Activated CD4-positive, alpha-beta T cell treated with anti-CD3 and anti-CD28 coated beads for 36 hours (primary cell): ENCODE measurements at regions of chr19 and their contacts with region 1.

Region 1: DNA sequence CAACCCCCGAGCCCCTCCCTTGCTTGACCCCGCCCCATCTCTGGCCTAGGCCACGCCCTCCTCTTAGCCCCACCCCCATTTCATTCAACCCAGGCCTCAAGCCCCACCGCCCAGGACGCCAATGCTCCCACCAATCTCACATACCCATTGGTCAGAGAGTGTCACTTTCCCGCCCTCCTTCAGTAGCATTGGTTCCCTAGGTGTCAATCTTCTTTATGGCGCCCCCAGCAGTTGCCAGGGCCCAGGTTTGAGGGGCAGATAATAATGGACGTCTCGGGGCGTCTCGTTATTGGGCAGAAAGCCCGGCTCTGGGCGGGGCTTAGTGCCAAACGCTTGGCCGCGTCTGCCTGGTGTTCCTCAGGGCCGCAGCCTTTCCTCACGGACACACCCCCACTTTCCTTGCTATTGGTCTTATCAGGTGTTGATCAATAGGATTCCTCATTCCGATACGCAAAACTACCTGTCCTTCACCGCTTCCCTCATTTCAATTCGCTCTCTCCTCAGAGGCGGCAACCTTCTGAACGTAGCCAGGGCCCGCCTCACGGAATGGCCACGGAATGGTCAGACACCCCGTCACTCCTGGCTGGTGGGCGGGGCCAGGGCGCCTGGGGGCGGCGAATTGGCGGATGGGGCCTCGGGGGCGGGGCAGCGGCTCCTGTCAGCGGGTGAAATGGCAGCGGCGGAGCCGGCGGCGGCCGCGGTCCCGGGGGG is at the start of gene EVI5L:
- DNase-seq: peak; percentile 100
- ATAC-seq: peak; percentile 91
- H3K4me3 Mint-ChIP-seq: peak within 1 kb of the TSS; percentile 83
- H3K27ac Mint-ChIP-seq: peak within 1 kb of the TSS; percentile 94
- H3K4me1 Mint-ChIP-seq: peaks cover 14% of the 10 kb centered on the region
- H3K27me3 Mint-ChIP-seq: peaks cover 2% of the 10 kb centered on the region
- total RNA-seq, gene EVI5L: 4.8 to 5.9 TPM

Region 2: DNA sequence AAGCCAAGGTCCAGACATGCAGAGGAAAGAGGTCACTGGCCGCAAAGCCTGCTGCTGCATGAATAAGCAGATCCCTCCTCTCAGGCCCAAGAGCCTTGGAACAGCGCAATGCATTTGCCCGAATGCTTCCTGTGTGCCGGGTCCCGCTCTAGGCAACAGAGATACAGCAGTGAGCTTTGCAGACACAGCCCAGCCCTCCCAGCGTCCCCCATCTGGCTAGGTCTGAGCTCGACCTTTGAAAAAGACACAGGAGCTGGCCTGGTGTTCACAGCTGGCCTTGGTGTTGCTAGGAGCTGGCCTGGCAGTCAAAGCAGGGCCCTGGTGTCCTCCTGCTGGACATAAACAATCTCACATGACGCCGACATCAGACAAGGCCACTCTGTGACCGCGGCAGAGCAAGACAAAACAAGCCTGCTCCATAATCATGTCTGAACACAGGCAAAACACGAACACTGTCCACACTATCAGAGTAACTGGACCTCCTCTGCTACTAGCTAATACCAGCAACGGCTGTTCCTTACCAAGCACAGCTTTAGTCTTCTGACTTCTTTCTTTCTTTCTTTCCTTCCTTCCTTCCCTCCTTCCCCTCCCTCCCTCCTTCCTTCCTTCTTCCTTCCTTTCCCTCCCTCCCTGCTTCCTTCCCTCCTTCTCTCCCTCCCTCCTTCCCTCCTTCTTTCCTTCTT is 335.2 kb before region 1 on chr19:
- CTCF ChIA-PET with region 1: no interaction called
- POLR2A ChIA-PET with region 1: no interaction called
- intact Hi-C with region 1: no loop called
- DNase-seq: no peak
- ATAC-seq: no peak
- H3K4me3 Mint-ChIP-seq: no peak overlapping the region
- H3K27ac Mint-ChIP-seq: no peak overlapping the region
- H3K4me1 Mint-ChIP-seq: peaks cover 14% of the 10 kb centered on the region
- H3K27me3 Mint-ChIP-seq: peaks cover 14% of the 10 kb centered on the region

Region 3: DNA sequence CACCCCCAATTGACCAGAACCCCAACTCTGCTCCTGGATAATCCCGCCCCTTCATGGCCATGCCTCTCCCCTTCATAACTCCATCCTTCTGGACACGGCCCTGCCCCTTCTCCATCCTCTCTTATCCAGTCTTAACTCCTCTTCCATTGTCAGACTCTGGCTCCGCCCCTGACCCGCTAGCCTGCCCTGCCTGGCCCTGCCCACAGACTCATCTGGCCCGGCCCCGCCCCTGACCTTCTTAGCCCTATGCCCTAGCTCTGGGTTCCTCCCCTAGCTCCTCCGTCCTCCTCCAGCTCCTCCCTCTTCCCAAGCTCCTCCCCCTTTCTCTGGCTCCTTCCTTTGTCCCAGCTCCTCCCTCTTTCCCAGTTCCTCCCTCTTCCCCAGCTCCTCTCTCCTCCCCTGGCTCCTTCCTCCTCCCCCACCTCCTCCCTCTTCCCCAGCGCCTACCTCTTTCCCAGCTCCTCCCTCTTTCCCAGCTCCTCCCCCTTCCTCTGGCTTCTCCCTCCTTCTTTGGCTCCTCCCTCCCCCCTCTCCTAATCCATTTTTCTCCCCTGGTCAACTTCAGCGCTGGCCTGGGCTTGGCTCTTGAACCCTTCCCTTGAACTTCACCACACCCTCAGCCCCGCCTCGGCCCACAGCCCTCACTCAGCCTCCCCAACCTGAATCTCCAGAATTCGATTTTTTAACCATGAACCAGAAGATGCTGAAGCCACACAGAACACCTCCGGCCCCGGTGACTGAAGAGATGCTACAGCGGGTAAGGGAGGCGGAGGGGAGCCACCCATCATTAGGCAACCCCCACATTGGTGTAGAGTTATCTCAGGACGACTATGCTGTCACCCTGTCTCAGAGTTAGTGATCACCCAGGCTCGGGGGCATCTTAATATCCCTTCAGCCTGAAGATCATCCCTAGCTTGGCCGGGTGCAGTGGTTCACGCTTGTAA is 323.1 kb before region 1 on chr19:
- CTCF ChIA-PET with region 1: no interaction called
- POLR2A ChIA-PET with region 1: interaction called, 4 read pairs
- intact Hi-C with region 1: loop called in 1 of 2 experiments (anchors 1 kb)
- DNase-seq: peak; percentile 81
- ATAC-seq: peak; percentile 85
- H3K4me3 Mint-ChIP-seq: no peak overlapping the region
- H3K27ac Mint-ChIP-seq: no peak overlapping the region
- H3K4me1 Mint-ChIP-seq: peaks cover 13% of the 10 kb centered on the region
- H3K27me3 Mint-ChIP-seq: peaks cover 28% of the 10 kb centered on the region

Region 4: GRCh38 chr19:7629347-7630054 is 200.2 kb before region 1 on chr19 and contains the starts of genes PET100 and XAB2:
- CTCF ChIA-PET with region 1: no interaction called
- POLR2A ChIA-PET with region 1: no interaction called
- intact Hi-C with region 1: loop called in 1 of 2 experiments (anchors 1 kb)
- DNase-seq: peak; percentile 97
- ATAC-seq: peak; percentile 99
- H3K4me3 Mint-ChIP-seq: peak within 1 kb of the TSS; percentile 88
- H3K27ac Mint-ChIP-seq: peak within 1 kb of the TSS; percentile 97
- H3K4me1 Mint-ChIP-seq: peaks cover 32% of the 10 kb centered on the region
- H3K27me3 Mint-ChIP-seq: no peaks in the 10 kb centered on the region
- total RNA-seq, gene PET100: 45.1 to 99.4 TPM
- total RNA-seq, gene XAB2: 45.9 to 48.3 TPM

Region 5: DNA sequence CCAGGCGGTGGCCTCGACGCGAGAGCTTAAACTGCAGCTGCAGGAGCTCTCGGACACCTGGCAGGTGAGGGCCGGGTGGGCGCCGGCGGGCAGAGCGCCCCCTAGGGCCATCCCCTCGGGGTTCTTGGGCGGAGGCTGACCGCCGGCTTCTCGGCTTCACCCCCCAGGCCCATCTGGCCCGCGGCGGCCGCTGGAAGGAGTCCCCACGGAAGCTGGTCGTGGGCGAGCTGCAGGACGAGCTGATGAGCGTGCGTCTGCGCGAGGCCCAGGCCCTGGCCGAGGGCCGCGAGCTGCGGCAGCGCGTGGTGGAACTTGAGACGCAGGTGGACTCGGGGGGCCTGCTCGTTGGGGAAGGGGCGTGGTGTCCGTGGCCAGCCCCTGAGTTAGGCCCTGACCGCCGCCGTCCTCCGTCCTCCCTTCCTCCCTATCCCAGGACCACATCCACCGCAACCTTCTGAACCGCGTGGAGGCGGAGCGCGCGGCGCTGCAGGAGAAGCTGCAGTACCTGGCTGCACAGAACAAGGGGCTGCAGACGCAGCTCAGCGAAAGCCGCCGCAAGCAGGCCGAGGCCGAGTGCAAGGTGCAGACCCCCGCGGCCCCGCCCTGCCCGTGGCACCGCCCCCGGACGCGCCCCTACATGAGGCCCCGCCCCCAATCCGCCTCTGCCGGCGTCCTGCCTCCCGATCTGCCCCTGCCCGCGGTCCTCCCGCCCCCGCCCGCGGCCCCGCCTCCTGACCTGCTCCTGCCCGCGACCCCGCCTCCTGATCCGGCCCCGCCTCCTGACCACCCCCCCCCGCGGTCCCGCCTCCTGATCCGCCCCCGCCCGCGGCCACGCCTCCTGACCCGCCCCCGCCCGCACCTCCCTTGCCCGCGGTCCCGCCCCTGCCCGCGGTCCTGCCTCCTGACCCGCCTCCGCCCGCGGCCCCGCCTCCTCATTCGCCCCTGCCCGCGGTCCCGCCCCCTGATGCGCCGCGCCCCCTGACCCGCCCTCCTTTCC is 32.5 kb after region 1 on chr19:
- CTCF ChIA-PET with region 1: no interaction called
- POLR2A ChIA-PET with region 1: no interaction called
- intact Hi-C with region 1: loop called in 1 of 2 experiments (anchors 1 kb)
- DNase-seq: peak; percentile 95
- ATAC-seq: peak; percentile 74
- H3K4me3 Mint-ChIP-seq: peak overlapping the region; percentile 40
- H3K27ac Mint-ChIP-seq: no peak overlapping the region
- H3K4me1 Mint-ChIP-seq: peaks cover 12% of the 10 kb centered on the region
- H3K27me3 Mint-ChIP-seq: peaks cover 13% of the 10 kb centered on the region

Region 6: DNA sequence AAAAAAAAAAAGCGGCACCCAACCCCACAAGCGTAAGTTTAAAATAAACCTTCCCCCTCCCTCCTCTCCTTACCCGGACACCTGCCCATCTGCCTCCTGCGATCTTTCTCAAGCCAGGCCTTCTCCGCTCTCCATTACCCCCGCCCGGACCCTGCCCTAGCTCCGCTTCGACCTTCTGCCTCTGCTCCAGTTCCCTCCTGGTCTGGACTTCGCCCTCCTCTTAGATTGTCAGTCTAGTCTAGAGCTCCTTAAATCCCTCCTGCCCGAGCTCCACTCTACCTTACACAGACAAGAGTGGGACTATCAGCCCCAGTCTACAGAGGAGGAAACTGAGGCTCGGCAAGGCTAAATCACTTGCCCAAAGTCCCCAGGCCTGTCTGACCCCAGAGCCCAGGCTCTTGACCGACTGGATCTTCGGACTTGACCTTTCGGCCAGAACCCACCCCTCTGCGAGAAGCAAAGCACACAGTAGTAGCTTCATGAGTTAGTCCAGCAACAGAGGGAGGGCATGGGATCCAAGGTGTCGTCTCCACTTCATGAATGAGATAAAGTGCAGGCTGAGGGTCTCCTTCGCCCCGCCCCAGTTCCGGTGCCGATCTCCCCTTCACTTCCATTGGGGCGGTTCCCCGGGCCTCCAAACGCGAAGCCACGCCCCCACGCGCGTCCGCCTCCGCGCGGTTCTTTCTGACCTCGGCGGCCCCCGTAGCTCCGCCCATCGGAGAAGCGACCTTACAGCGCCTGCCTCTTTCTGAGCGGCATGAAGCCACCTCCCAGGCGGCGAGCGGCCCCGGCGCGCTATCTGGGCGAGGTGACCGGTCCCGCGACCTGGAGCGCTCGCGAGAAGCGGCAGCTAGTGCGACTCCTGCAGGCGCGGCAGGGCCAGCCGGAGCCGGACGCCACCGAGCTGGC is 90.1 kb after region 1 on chr19 and contains the start of gene SNAPC2:
- CTCF ChIA-PET with region 1: interaction called, 3 read pairs
- POLR2A ChIA-PET with region 1: no interaction called
- intact Hi-C with region 1: loop called (anchors 1 kb)
- DNase-seq: peak; percentile 98
- ATAC-seq: peak; percentile 76
- H3K4me3 Mint-ChIP-seq: peak within 1 kb of the TSS; percentile 82
- H3K27ac Mint-ChIP-seq: peak within 1 kb of the TSS; percentile 87
- H3K4me1 Mint-ChIP-seq: peaks cover 32% of the 10 kb centered on the region
- H3K27me3 Mint-ChIP-seq: peaks cover 20% of the 10 kb centered on the region
- total RNA-seq, gene SNAPC2: 14.6 to 16.2 TPM

Region 7: GRCh38 chr19:8252922-8253589 is 423.3 kb after region 1 on chr19:
- CTCF ChIA-PET with region 1: no interaction called
- POLR2A ChIA-PET with region 1: no interaction called
- intact Hi-C with region 1: no loop called
- DNase-seq: peak; percentile 91
- ATAC-seq: peak; percentile 96
- H3K4me3 Mint-ChIP-seq: no peak overlapping the region
- H3K27ac Mint-ChIP-seq: no peak overlapping the region
- H3K4me1 Mint-ChIP-seq: no peaks in the 10 kb centered on the region
- H3K27me3 Mint-ChIP-seq: no peaks in the 10 kb centered on the region